Activated naive CD4-positive, alpha-beta T cell treated with anti-CD3 and anti-CD28 coated beads for 36 hours (primary cell): ENCODE measurements at regions of chr22 and their contacts with region 1.

Region 1: DNA sequence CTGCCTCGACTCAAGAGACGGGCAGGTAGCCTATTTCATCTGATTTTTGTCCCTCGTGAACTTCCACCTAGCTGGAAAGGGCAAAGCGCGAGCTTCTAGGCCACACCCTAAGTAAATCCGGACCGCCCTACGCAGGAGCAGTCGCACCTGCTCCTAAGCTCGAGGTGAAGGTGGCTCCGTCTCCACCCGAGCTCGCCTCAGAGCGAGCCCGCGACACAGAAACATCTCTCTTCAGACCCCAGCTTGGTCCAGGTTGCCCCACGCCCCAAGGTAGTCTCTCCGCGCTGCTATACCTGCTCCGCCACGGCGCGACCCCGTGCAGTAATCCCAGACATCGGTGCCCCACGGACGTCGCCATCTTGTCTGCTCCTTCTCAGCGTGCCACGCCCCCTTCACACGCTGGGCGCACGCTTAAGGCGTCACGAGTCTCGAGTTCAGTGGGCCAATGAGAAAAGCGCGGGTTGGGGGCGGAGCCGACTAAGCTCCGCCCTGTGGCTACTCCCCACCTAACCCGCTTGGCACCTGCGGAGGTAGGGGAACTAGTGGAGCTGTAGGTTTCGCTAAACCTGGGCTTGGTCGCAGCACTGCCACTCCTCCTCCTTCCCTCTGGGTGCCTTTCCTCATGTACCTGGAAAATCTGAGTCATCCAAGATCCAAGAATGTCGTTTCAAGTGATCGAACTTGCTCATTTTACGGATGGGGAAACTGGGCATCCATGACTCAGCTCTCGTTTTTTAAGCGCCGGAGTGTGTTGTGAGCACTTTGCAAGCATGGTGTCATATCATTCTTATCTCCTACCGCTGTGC is at the start of gene PISD:
- DNase-seq: peak; percentile 97
- H3K4me3 Mint-ChIP-seq: peak within 1 kb of the TSS; percentile 91
- H3K27ac Mint-ChIP-seq: peak within 1 kb of the TSS; percentile 84
- H3K4me1 Mint-ChIP-seq: peaks cover 38% of the 10 kb centered on the region
- H3K27me3 Mint-ChIP-seq: no peaks in the 10 kb centered on the region
- total RNA-seq, gene PISD: 45.6 to 45.7 TPM

Region 2: DNA sequence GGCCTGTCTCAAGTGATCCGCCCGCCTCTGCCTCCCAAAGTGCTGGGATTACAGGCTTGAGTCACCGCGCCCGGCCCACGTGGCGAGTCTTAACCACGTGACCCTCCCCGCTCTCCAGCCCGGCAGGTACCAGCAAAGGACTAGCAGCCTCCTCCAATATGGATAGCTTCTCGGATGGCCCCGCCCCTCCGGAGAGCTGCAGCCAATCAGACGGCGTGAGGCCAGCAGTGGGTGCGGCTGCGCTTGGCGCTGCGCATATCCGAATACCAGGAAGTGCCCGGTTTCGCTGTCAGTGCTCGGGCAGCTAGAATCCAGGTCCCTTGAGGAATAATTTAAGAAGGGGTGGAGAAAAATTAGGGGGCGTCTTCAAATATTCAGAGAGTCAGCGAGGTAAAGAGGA is 14.6 kb after region 1 on chr22:
- CTCF ChIA-PET with region 1: interaction called, 30 read pairs
- intact Hi-C with region 1: loop called (anchors 2 kb)
- DNase-seq: peak; percentile 95
- H3K4me3 Mint-ChIP-seq: peak overlapping the region; percentile 85
- H3K27ac Mint-ChIP-seq: peak overlapping the region; percentile 82
- H3K4me1 Mint-ChIP-seq: peaks cover 10% of the 10 kb centered on the region
- H3K27me3 Mint-ChIP-seq: no peaks in the 10 kb centered on the region

Region 3: DNA sequence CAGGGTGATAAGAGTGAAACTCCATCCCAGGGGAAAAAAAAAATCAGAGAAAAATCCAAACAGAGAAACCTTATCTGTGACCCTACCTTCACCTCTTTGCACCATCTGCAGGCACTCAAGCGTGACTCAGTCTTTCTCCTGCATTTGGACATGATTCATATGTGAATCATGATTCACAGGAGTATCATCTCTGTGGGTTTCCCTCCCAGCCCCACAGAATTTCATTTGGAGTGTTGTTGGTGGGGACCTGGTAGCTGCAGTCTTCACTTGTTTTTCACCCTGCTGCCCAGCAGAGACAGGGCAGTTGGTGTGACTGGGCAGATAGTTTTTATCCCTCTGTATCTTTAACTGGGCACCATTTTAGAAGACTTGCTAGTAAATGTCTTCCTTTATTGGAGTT is 167.5 kb after region 1 on chr22:
- CTCF ChIA-PET with region 1: interaction called, 6 read pairs
- intact Hi-C with region 1: loop called (anchors 2 kb)
- DNase-seq: peak; percentile 77
- H3K4me3 Mint-ChIP-seq: no peak overlapping the region
- H3K27ac Mint-ChIP-seq: no peak overlapping the region
- H3K4me1 Mint-ChIP-seq: peaks cover 22% of the 10 kb centered on the region
- H3K27me3 Mint-ChIP-seq: no peaks in the 10 kb centered on the region

Region 4: GRCh38 chr22:31841078-31841827 is 179.2 kb after region 1 on chr22:
- CTCF ChIA-PET with region 1: no interaction called
- intact Hi-C with region 1: no loop called
- DNase-seq: no peak
- H3K4me3 Mint-ChIP-seq: no peak overlapping the region
- H3K27ac Mint-ChIP-seq: no peak overlapping the region
- H3K4me1 Mint-ChIP-seq: peaks cover 4% of the 10 kb centered on the region
- H3K27me3 Mint-ChIP-seq: no peaks in the 10 kb centered on the region

Region 5: GRCh38 chr22:31970490-31971444 is 308.7 kb after region 1 on chr22:
- CTCF ChIA-PET with region 1: interaction called, 29 read pairs
- intact Hi-C with region 1: loop called (anchors 1 kb)
- DNase-seq: peak; percentile 90
- H3K4me3 Mint-ChIP-seq: peak overlapping the region; percentile 68
- H3K27ac Mint-ChIP-seq: no peak overlapping the region
- H3K4me1 Mint-ChIP-seq: peaks cover 11% of the 10 kb centered on the region
- H3K27me3 Mint-ChIP-seq: no peaks in the 10 kb centered on the region

Region 6: DNA sequence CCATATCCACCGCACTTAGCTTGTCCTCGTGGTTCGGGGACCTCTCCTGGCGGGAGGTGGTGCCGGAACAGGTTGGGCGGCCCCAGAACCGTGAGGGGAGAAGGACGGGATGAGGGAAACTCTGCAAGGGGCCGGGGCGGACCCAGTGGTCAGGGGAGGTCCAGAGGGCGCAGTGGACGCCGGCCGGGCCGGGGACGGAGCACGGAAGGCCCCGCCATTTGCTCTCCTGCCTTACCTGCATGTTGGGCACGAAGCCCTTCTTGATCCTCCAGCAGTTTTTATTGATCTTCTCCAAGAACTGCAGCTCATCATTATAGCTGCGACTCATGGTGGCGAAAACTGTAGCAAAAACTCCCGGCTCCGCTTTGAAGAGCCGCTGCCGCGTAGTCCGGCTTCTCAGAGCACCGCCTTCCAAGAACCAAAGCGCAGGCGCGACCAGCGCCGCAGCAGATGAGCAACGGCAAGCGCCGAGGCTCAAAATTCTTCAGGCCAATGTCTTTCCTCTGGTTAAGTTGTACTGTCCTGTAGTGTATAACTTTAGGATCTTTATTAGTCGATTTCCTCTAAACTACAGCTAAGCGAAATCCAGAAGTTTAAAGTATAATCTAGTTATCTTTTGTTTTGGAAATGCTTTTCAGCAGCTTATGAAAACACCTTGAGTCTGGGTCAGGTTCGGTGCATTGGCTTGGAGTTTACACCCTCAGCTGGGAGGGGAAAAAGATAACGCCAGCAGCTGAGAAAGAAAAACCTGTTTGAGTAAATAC is 750.0 kb after region 1 on chr22 and contains the start of gene RTCB:
- CTCF ChIA-PET with region 1: no interaction called
- intact Hi-C with region 1: loop called (anchors 5 kb)
- DNase-seq: peak; percentile 96
- H3K4me3 Mint-ChIP-seq: peak within 1 kb of the TSS; percentile 91
- H3K27ac Mint-ChIP-seq: peak within 1 kb of the TSS; percentile 94
- H3K4me1 Mint-ChIP-seq: peaks cover 48% of the 10 kb centered on the region
- H3K27me3 Mint-ChIP-seq: no peaks in the 10 kb centered on the region
- total RNA-seq, gene RTCB: 84.2 to 85.5 TPM